ENCODE measurements at regions of chr18 and their contacts with region 1.

Region 1: DNA sequence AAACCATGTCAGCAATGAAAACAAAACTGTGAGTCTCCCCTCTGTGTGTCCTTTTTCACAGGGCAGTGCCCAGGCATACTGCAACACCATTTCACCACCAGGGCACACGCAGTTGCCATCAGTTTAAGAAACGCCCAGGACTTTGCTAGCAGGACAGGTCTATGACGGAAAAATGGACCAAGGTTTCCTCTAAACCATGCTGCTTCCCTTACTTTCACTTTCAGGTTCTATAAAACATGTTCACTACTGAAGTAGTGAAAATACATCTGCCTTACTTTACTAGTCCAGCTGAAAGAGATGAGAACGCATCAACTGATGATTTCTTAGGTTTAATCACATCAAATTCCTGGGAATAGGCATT is 110.5 kb downstream of the TCF4 start:
- H3K4me3 Mint-ChIP-seq: peak overlapping the region; percentile 75
- H3K27ac Mint-ChIP-seq: peak overlapping the region; percentile 70
- H3K4me1 Mint-ChIP-seq: peaks cover 32% of the 10 kb centered on the region
- H3K27me3 Mint-ChIP-seq: no peaks in the 10 kb centered on the region

Region 2: GRCh38 chr18:54860941-54861340 is 616.5 kb before region 1 on chr18:
- intact Hi-C with region 1: no loop called
- H3K4me3 Mint-ChIP-seq: no peak overlapping the region
- H3K27ac Mint-ChIP-seq: no peak overlapping the region
- H3K4me1 Mint-ChIP-seq: no peaks in the 10 kb centered on the region
- H3K27me3 Mint-ChIP-seq: peaks cover 2% of the 10 kb centered on the region

Region 3: DNA sequence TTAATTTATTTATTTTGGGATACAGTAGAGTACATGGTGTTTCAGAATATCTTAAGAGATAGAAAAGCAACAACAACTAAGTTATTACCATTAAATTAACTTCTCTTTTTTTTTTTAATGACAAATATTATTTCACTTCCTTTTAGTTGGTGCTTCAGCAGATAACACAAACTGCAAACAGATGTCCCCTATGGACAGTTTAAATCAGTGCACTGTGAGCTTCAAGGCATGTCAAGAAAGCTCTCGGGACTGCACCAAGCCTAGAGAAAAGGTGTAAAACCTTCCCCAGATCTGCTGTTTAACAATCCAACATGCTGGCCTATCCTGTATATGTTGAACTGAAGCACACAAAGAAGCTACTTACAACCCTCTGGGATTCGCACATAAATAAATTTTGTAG is 12.2 kb before region 1 on chr18:
- intact Hi-C with region 1: loop called (anchors 1 kb)
- H3K4me3 Mint-ChIP-seq: no peak overlapping the region
- H3K27ac Mint-ChIP-seq: peak overlapping the region; percentile 48
- H3K4me1 Mint-ChIP-seq: peaks cover 22% of the 10 kb centered on the region
- H3K27me3 Mint-ChIP-seq: no peaks in the 10 kb centered on the region

Measured in dendritic cell treated with granulocyte-macrophage colony-stimulating factor and Interleukin-4, amounts not matched to agents 40 ng/mL and 50 ng/mL, for 4 days (primary cell).